Activated T-helper 2 cell treated with anti-CD3 and anti-CD28 coated beads, Interferon-gamma antibody, Interleukin-2, Interleukin-4, amounts not matched to agents 10 μg/mL and 5 μg/mL and 100 μg/mL, durations not matched to agents 14 hours and 24 hours and 36 hours (primary cell): ENCODE measurements at regions of chr16 and their contacts with region 1.

Region 1: GRCh38 chr16:14285513-14286385 is 214.6 kb downstream of the MRTFB start:
- DNase-seq: peak; percentile 91
- H3K4me3 Mint-ChIP-seq: peak overlapping the region; percentile 91
- H3K27ac Mint-ChIP-seq: peak overlapping the region; percentile 64
- H3K4me1 Mint-ChIP-seq: peaks cover 12% of the 10 kb centered on the region
- H3K27me3 Mint-ChIP-seq: peaks cover 2% of the 10 kb centered on the region

Region 2: DNA sequence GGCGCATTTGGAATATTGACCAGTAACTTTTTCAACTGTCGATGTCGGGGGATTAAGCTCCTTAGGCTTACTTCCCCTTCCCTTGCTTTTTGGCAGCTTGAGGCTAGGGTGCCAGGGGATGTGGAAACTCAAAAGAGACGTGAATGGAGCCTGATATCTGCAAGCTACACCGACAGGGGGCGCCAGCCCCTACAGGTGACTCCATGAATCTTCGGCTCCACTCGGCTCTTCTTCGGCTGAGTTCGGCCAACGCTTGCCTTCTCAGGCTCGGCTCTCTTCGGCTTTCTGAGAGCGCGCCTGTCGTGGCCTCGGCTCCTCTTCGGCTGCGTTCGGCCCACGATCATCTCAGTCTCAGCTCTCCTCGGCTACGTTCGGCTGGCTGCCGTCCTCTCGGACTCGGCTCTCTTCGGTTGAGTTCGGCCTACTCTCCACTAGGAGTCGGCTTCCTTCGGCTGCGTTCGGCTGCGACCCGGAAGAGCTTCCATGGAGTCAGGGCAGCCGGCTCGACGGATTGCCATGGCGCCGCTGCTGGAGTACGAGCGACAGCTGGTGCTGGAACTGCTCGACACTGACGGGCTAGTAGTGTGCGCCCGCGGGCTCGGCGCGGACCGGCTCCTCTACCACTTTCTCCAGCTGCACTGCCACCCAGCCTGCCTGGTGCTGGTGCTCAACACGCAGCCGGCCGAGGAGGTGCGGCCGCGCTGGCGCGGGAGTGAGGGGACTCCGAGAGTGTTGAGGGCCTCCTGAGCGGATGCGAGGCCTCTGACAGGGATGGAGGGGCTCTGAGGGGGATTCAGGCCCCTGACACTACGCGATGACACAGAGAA is 365.9 kb before region 1 on chr16 and contains the start of gene ERCC4:
- intact Hi-C with region 1: loop called (anchors 2 kb)
- DNase-seq: peak; percentile 99
- H3K4me3 Mint-ChIP-seq: peak within 1 kb of the TSS; percentile 99
- H3K27ac Mint-ChIP-seq: peak within 1 kb of the TSS; percentile 94
- H3K4me1 Mint-ChIP-seq: peaks cover 22% of the 10 kb centered on the region
- H3K27me3 Mint-ChIP-seq: peaks cover 7% of the 10 kb centered on the region
- total RNA-seq, gene ERCC4: 11.9 and 13.3 TPM in 2 replicates

Region 3: DNA sequence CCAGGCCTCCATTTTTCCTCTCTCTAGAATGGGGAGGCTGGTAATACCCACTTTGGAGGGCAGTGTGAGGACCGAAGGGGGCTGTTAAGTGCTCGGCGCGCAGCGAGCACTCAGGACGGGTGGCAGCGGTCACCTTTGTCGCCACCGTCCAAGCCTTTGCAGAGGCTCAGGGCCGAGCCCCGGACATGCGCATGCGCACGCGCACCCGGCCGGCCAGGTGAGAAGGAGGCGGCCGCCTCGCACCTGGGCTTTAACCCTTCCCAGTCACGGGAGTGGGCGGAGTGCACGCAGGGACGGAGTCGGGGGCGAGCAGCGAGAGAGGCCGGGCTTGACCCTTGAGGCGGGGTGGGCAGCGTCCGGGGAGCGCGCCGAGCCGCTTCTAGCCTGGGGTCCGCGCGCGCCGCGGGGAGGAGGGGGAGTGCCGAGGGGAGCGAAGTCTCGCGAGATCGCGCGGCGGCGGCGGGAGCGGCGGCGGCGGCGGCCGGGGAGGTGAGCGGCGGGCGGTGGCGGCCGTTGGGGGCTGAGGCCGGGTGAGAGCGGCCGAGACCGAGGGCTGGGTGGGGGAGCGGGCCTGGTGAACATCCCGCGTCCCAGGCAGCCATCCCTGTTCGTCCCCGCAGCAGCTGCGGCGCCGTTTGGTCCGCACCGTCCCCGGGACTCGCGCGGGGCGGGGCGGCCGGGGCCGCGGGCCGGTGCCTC is 214.7 kb before region 1 on chr16 and contains the start of gene MRTFB:
- intact Hi-C with region 1: loop called (anchors 5 kb)
- DNase-seq: peak; percentile 77
- H3K4me3 Mint-ChIP-seq: peak within 1 kb of the TSS; percentile 85
- H3K27ac Mint-ChIP-seq: peak within 1 kb of the TSS; percentile 72
- H3K4me1 Mint-ChIP-seq: peaks cover 9% of the 10 kb centered on the region
- H3K27me3 Mint-ChIP-seq: peaks cover 2% of the 10 kb centered on the region
- total RNA-seq, gene MRTFB: 13.7 and 14.6 TPM in 2 replicates

Region 4: GRCh38 chr16:14300705-14301168 is 15.0 kb after region 1 on chr16:
- intact Hi-C with region 1: loop called (anchors 2 kb)
- DNase-seq: no peak
- H3K4me3 Mint-ChIP-seq: peak overlapping the region; percentile 79
- H3K27ac Mint-ChIP-seq: no peak overlapping the region
- H3K4me1 Mint-ChIP-seq: peaks cover 8% of the 10 kb centered on the region
- H3K27me3 Mint-ChIP-seq: peaks cover 38% of the 10 kb centered on the region

Region 5: DNA sequence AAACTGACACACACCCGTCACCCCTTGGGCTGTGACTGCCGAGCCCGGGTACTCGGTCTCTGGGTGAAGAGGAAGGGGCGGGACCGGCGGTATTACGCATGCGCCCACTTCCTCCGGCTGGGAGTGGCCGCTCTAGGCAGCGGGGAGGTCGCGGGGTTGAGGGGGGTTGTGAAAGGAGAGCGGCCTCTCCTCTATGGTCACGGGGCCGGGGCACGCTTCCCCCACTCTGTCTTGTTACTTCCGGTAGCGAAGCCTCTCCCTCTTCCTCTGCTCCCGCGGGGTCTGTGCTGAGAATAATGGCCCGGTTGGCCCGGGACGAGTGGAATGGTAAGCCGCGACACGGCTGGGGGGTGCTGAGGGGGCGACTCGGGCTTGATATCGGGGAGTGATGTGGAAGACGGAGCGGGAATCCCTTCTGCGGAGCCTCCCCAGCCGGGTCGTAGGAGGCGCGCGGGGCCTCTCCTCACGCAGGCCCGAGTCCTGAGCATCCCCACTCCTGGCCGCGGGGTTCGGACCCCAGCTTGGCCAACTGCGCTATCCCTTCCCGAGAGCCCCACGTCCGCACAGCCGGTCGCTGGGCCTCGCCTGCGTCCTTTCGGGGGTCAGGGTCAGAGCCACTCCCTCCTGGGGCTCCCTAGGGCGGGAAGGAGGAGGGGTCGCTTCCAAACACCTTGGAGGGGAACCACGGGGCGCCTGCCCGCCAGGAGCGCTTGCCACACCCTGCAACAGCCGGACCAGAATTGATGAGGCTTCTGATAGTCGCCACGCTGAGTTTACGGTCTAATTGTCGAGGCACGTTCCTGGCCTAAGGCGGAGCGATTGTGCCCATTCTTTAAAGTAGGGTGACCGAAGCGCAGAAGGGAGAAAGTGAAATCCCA is 347.2 kb after region 1 on chr16 and contains the start of gene BFAR:
- intact Hi-C with region 1: loop called (anchors 5 kb)
- DNase-seq: peak; percentile 98
- H3K4me3 Mint-ChIP-seq: peak within 1 kb of the TSS; percentile 99
- H3K27ac Mint-ChIP-seq: peak within 1 kb of the TSS; percentile 98
- H3K4me1 Mint-ChIP-seq: peaks cover 36% of the 10 kb centered on the region
- H3K27me3 Mint-ChIP-seq: no peaks in the 10 kb centered on the region
- total RNA-seq, gene BFAR: 54.8 and 55.7 TPM in 2 replicates